Cardiac septum (tissue), 1 donor: ENCODE measurements at regions of chr21 and their contacts with region 1.

Region 1: GRCh38 chr21:27759820-27760219 is 792.9 kb upstream of the ADAMTS5 start:
- DNase-seq: no peak

Region 2: GRCh38 chr21:27631471-27631870 is 128.3 kb before region 1 on chr21:
- intact Hi-C with region 1: no loop called
- DNase-seq: no peak

Region 3: GRCh38 chr21:27802816-27803475 is 43.1 kb after region 1 on chr21:
- intact Hi-C with region 1: loop called (anchors 5 kb)
- DNase-seq: no peak